K562 (cell line): ENCODE measurements at regions of chr3 and their contacts with region 1.

Region 1: GRCh38 chr3:106130384-106131198 is 261.8 kb upstream of the CBLB start:
- DNase-seq: peak; percentile 36 to 85 (median 50)
- ATAC-seq: peak; percentile 81
- H3K4me3 ChIP-seq: peak overlapping the region; percentile 20; the same call in 1 of the 2 replicates
- H3K27ac ChIP-seq: peak overlapping the region; percentile 88
- H3K4me1 ChIP-seq: peaks cover 0 to 20% of the 10 kb centered on the region in 2 experiments; a peak in 4 of 5 replicates
- H3K27me3 ChIP-seq: no peaks in the 10 kb centered on the region
- CTCF ChIP-seq: no peak
- EP300 ChIP-seq: peak; percentile 85; the same call in 1 of the 2 replicates
- POLR2A ChIP-seq: no peak
- RAD21 ChIP-seq: peak in 1 of 2 experiments; percentile 13; a peak in 1 of 4 replicates

Region 2: GRCh38 chr3:106206146-106206545 is 75.6 kb after region 1 on chr3:
- CTCF ChIA-PET with region 1: no interaction called
- POLR2A ChIA-PET with region 1: no interaction called
- in situ Hi-C with region 1: no loop called
- intact Hi-C with region 1: loop called (anchors 10 kb)
- DNase-seq: no peak
- ATAC-seq: no peak
- H3K4me3 ChIP-seq: no peak overlapping the region
- H3K27ac ChIP-seq: no peak overlapping the region
- H3K4me1 ChIP-seq: no peaks in the 10 kb centered on the region
- H3K27me3 ChIP-seq: no peaks in the 10 kb centered on the region
- CTCF ChIP-seq: no peak
- EP300 ChIP-seq: no peak
- POLR2A ChIP-seq: no peak
- RAD21 ChIP-seq: no peak